Heart right ventricle (tissue), 16 donors: ENCODE measurements at regions of chr3 and their contacts with region 1.

Region 1: DNA sequence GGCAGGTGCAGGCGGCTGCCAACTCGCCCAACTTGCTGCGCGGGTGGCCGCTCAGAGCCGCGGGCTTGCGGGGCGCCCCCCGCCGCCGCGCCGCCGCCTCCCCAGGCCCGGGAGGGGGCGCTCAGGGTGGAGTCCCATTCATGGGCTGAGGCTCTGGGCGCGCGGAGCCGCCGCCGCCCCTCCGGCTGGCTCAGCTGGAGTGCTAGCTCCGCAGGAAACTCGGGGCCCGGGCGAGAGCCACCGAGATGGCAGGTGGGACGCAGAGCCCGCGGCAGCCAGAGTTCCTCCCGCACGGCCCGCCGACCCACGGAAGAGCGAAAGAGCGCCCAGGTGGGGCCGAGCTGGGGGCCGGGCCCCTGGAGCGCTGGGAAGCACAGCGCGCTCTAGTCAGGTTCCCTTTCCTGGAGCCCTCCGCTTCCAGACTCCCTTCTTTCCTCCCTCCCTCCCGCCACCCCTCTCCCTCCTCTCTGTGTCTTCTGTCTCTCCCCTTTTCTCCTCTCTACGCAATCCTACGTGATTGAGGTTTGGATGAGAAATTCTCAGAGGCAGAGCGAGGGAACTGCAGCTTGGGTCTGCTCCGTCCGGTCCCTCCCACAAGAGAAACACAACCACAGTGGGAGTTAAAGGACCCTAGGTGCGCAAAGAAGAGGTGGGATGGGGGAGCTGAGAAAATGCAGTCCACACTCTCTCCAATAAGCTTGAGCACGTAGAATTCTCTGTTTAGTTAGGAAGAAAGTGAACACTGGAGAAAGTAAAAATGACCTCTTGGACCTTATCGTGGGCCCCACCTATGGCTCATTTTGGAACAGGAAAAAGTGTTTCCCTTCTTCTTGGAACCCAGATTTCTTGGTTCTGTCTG is 317.3 kb downstream of the FGF12 start:
- DNase-seq: peak in 1 of 2 donors; percentile 15
- ATAC-seq: peak in 7 of 8 donors; percentile 25 to 47 (median 42)
- H3K4me3 ChIP-seq: peak overlapping the region; percentile 30 to 72 (median 62)
- H3K27ac ChIP-seq: peak overlapping the region in 9 of 10 donors; percentile 64 to 87 (median 76)
- H3K4me1 ChIP-seq: peaks cover 0 to 34% (median 13%) of the 10 kb centered on the region in 9 donors
- H3K27me3 ChIP-seq: peaks cover 0 to 54% (median 0%) of the 10 kb centered on the region in 7 donors
- CTCF ChIP-seq: peak in 4 of 9 donors; percentile 7 to 30 (median 21)

Region 2: DNA sequence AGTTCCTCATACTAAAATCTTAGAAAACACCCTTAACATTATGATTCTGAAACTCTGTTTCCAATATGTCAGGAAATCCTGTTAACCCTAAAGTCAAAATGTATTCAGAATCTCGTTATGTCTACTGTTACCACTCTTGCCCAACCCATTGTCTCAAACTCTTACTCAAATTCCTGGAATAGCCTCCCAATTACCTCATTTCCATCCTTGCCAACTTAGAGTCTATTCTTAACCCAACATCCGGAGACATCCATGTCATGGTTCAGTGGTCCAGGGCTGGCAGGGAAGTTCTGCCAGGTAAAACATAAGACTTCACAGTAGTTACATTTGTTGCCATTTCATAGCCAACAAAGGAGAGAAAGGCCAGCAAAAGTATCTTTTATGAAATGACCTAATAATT is 355.2 kb before region 1 on chr3:
- intact Hi-C with region 1: loop called in 1 of 10 experiments (anchors 5 kb)
- DNase-seq: no peak
- ATAC-seq: peak in 5 of 8 donors; percentile 12 to 82 (median 56)
- H3K4me3 ChIP-seq: no peak overlapping the region
- H3K27ac ChIP-seq: peak overlapping the region in 1 of 10 donors; percentile 14
- H3K4me1 ChIP-seq: peaks cover 0 to 10% (median 0%) of the 10 kb centered on the region in 9 donors
- H3K27me3 ChIP-seq: no peaks in the 10 kb centered on the region
- CTCF ChIP-seq: no peak

Region 3: DNA sequence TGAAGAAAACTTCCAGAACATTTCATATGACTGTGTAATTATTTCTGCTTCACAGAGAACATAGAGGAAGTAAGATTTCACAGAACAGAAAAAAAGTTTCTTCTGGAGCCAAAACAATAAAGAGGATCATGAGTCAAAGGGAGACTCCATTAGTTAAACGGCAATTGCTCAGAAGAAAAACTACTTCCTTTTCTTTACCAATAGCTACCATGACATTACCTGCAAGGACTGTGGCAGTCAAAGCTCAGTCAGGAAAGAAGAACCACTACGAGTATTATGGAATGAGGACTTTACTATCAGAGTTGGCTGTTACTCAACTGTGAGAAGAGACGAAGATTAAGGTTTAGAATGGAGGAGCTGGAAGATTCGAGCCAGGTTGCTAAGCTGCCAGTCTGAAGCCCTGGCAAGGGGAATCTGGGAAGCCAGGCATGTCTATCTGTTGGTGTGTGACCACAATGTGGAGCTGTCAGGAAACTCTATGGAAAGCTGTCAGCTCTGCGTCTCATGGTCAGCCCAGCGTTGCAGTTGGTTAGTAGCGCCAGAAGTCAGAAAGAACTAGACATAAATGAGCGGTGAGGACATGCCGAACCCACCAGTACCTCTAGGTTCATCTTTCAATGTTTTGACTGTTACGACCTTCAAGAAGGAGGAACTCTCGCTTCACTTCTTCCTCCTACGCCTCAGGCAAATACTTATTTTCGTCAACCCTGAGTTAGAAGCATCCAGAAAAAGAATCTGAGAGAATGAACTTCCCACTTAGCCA is 287.0 kb before region 1 on chr3:
- intact Hi-C with region 1: loop called in 1 of 10 experiments (anchors 10 kb)
- DNase-seq: no peak
- ATAC-seq: peak in 2 of 8 donors; percentile 17 to 63
- H3K4me3 ChIP-seq: no peak overlapping the region
- H3K27ac ChIP-seq: no peak overlapping the region
- H3K4me1 ChIP-seq: no peaks in the 10 kb centered on the region
- H3K27me3 ChIP-seq: no peaks in the 10 kb centered on the region
- CTCF ChIP-seq: no peak

Region 4: GRCh38 chr3:192188218-192188835 is 221.7 kb before region 1 on chr3:
- intact Hi-C with region 1: loop called in 1 of 10 experiments (anchors 10 kb)
- DNase-seq: peak; percentile 19 to 29
- ATAC-seq: peak in 2 of 8 donors; percentile 63 to 69
- H3K4me3 ChIP-seq: no peak overlapping the region
- H3K27ac ChIP-seq: no peak overlapping the region
- H3K4me1 ChIP-seq: peaks cover 0 to 23% (median 0%) of the 10 kb centered on the region in 9 donors
- H3K27me3 ChIP-seq: no peaks in the 10 kb centered on the region
- CTCF ChIP-seq: peak; percentile 32 to 71 (median 63)